HAP-1 (cell line): ENCODE measurements at regions of chr1 and their contacts with region 1.

Region 1: GRCh38 chr1:91929250-91929649 is 20.0 kb upstream of the BRDT start:
- DNase-seq: peak; percentile 69 to 77
- H3K4me3 ChIP-seq: no peak overlapping the region
- H3K4me1 ChIP-seq: peaks cover 2% of the 10 kb centered on the region; the same call in 1 of the 2 replicates
- H3K27me3 ChIP-seq: no peaks in the 10 kb centered on the region

Region 2: DNA sequence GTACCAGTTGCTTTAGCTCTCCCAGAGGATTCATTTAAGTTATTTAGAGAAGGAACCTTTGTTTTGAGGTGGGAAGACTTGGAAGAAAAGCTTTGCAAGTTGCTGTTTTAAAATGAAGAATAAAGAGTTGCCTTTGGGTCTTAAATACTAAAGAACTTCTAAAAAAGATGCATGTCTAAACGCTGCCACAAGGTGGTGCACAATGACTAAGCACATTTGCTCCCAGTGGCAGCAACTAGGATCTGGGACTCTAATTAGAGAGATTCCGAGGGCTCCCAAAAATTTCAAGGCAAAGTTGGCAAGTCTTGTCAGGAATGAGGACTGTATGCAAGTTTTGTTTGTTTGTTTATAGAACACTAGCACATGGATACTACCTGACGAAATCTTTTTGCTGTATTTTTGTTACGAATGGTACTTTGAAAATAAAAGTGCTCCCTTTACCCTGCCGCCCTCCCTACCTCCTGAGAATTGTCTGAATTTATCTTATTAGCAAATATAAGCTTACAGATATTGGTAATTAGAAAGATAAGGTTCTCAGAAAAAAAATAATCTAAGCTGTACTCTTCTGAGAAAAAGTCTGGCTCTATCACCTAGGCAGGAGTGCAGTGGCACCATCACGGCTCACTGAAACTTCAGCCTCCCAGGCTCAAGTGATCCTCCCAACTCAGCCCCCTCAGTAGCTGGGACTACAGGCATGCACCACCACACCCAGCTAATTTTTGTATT is 646.4 kb before region 1 on chr1:
- in situ Hi-C with region 1: loop called (anchors 25 kb)
- DNase-seq: peak; percentile 71 to 75
- H3K4me3 ChIP-seq: no peak overlapping the region
- H3K4me1 ChIP-seq: no peaks in the 10 kb centered on the region
- H3K27me3 ChIP-seq: no peaks in the 10 kb centered on the region

Region 3: GRCh38 chr1:92219028-92219427 is 289.8 kb after region 1 on chr1:
- in situ Hi-C with region 1: no loop called
- DNase-seq: no peak
- H3K4me3 ChIP-seq: no peak overlapping the region
- H3K4me1 ChIP-seq: no peaks in the 10 kb centered on the region
- H3K27me3 ChIP-seq: no peaks in the 10 kb centered on the region